ENCODE measurements at regions of chr14 and their contacts with region 1.

Region 1: DNA sequence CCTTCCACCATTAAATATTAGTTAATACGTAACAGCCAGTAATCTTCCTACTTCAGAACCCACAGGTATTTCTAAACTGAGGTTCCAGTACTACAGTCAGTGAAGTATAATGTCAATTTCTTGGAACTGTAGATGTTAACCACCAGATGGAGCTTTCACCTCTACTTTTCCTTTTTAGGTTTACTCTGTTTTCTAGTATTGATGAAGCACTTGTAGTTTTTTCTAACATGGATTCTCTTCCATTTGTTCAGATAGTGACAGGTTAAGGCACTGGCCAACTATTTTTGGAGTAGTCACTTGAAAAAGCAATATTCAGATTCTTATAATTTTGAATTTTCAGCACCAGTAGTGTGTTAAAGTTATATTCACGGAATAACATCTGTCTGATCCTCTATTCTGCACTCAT is 4.6 kb upstream of the SEC23A start:
- DNase-seq: peak; percentile 48
- H3K4me3 ChIP-seq: no peak overlapping the region
- H3K27ac ChIP-seq: no peak overlapping the region
- H3K4me1 ChIP-seq: no peaks in the 10 kb centered on the region
- H3K27me3 ChIP-seq: no peaks in the 10 kb centered on the region
- CTCF ChIP-seq: peak; percentile 65

Region 2: GRCh38 chr14:38762426-38762825 is 345.2 kb before region 1 on chr14:
- CTCF ChIA-PET with region 1: no interaction called
- POLR2A ChIA-PET with region 1: no interaction called
- intact Hi-C with region 1: no loop called
- DNase-seq: no peak
- H3K4me3 ChIP-seq: no peak overlapping the region
- H3K27ac ChIP-seq: no peak overlapping the region
- H3K4me1 ChIP-seq: no peaks in the 10 kb centered on the region
- H3K27me3 ChIP-seq: no peaks in the 10 kb centered on the region
- CTCF ChIP-seq: no peak

Region 3: DNA sequence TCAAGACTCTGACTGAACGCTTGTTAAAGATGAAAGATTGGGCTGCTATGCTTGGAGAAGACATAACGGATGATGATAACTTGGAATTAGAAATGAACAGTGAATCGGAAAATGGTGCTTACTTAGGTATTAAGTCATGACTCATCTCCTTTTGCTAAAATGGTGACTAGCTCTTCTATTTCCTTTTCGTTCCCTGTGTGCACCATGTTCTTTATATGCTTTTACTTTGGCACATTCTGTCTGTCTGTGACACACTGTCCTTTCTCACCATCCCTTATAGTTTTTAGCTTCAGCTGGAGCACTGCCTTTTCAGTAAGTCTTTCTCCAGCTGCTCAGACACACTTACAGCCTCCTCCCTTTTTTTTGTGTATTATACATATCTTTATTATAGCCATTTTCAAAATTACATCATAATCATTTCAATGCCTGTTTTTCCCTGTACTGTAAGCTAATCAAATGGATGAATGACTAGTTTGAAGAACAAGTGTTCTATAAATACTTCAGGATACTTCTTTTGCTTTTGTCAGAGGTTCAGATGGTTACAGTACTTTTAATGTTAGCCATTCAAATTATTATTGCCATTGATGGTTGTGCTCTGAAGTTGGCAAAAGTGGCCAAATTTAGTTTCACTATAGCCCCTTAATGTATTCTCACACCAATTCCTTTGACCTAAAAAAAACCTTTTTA is 194.7 kb after region 1 on chr14:
- CTCF ChIA-PET with region 1: no interaction called
- POLR2A ChIA-PET with region 1: no interaction called
- intact Hi-C with region 1: no loop called
- DNase-seq: peak; percentile 49
- H3K4me3 ChIP-seq: no peak overlapping the region
- H3K27ac ChIP-seq: peak overlapping the region; percentile 33
- H3K4me1 ChIP-seq: peaks cover 14% of the 10 kb centered on the region
- H3K27me3 ChIP-seq: no peaks in the 10 kb centered on the region
- CTCF ChIP-seq: no peak

Region 4: DNA sequence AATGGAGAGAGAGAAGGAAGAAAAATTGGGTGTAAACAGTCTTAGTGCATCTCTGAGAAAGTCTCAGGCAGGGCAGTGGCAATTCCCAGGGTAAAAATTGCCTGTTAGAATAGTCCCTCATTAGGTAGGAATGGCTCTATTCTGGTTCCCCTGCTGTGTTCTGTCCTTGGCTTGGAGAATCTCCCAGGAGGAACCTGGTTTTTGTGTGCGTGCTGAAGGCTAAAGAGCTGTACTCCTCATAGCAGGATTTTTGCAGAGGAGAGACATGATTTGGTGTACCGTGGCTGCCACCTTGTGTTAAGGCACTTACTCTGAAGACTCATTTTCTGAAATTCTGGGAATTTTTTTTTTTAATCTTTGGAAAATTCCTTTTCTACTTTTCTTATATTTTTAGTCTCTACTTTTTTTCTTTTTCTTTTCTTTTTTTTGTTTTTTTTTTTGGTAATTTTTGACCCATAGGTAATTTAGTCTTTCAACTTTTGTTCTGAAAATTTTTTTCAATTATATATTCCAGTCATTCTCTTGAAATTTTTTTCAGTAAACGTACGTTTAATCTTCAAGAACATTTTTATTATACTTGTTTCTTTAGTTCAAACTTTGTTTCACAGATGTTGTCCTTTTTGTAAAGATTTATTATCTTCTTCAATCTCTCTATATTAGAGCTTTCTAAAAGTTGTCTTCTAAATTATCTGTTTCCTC is 260.8 kb after region 1 on chr14:
- CTCF ChIA-PET with region 1: interaction called, 3 read pairs
- POLR2A ChIA-PET with region 1: no interaction called
- intact Hi-C with region 1: loop called (anchors 1 kb)
- DNase-seq: peak; percentile 81
- H3K4me3 ChIP-seq: no peak overlapping the region
- H3K27ac ChIP-seq: no peak overlapping the region
- H3K4me1 ChIP-seq: no peaks in the 10 kb centered on the region
- H3K27me3 ChIP-seq: no peaks in the 10 kb centered on the region
- CTCF ChIP-seq: peak; percentile 79

Region 5: DNA sequence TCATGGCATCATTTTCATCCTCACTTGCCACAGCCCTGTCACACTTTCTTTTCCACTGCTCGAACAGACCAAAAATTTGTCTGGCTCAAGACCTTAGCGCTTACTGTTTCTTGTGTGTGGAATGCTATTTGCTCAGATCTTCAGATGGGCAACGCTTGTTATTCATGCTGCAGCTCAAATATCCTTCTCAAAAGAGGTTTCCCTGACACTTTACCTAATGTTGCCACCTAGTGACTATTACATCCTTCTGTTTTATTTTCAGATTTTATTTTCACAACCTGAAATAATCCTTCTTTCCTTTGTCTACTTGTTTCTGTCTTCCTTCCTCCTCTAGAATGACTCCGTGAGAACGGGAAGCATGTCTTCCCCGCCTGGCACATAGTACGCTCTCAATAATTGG is 319.0 kb after region 1 on chr14:
- CTCF ChIA-PET with region 1: no interaction called
- POLR2A ChIA-PET with region 1: no interaction called
- intact Hi-C with region 1: loop called (anchors 2 kb)
- DNase-seq: peak; percentile 39
- H3K4me3 ChIP-seq: no peak overlapping the region
- H3K27ac ChIP-seq: no peak overlapping the region
- H3K4me1 ChIP-seq: peaks cover 17% of the 10 kb centered on the region
- H3K27me3 ChIP-seq: no peaks in the 10 kb centered on the region
- CTCF ChIP-seq: peak; percentile 32; the same call in 1 of the 2 replicates

Measured in A673 (cell line).